Ascending aorta (tissue), 2 donors: ENCODE measurements at regions of chr5 and their contacts with region 1.

Region 1: DNA sequence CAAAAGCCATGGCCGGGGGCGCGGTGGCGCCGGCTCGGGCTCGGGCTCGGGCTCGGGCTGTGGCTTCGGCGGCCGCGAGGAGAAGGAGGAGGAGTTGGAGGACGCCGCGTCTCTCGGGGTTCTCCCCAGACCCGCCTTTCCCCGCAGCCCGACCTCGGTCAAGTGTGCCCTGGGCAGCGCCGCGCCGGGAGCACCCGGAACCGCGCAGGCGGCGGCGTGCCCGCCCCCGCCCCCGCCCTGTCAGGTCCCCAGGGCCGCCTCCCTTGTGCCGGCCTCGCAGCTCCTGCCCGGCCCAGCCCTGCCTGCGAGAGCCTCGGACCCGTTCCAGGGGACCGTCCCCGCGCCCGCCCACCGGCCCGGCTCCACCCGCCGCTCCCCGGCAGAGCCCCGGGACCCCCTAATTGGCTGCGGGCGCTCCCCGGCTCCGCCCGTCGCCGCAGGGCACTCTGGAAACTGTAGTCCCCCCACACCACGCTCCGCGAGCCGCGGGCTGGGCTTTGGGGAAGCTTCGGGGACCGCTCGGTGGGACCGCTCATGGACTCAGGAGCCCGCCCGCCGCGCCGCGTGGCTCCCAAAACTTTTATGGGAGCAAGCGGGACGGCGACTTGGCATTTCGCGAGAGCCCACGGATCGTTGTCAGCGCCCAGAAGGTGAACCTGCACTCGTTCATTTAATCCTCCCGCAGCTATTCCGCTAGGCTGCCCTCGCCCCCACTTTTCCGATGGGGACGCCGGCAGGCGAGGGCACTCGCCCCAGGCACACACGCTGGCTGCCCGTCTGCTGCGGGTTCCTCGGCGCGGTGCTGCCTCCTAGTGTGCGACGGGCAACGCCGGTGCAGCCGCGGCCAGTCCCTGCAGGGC is at the start of gene STK10:
- DNase-seq: peak; percentile 70 to 95
- H3K4me3 ChIP-seq: peak within 1 kb of the TSS; percentile 61 to 80
- H3K27ac ChIP-seq: peak within 1 kb of the TSS; percentile 86 to 88
- H3K4me1 ChIP-seq: peaks cover 0 to 8% of the 10 kb centered on the region in 2 donors
- H3K27me3 ChIP-seq: no peaks in the 10 kb centered on the region
- CTCF ChIP-seq: peak; percentile 91 to 94 (median 92)
- total RNA-seq, gene STK10: 18.4 TPM

Region 2: DNA sequence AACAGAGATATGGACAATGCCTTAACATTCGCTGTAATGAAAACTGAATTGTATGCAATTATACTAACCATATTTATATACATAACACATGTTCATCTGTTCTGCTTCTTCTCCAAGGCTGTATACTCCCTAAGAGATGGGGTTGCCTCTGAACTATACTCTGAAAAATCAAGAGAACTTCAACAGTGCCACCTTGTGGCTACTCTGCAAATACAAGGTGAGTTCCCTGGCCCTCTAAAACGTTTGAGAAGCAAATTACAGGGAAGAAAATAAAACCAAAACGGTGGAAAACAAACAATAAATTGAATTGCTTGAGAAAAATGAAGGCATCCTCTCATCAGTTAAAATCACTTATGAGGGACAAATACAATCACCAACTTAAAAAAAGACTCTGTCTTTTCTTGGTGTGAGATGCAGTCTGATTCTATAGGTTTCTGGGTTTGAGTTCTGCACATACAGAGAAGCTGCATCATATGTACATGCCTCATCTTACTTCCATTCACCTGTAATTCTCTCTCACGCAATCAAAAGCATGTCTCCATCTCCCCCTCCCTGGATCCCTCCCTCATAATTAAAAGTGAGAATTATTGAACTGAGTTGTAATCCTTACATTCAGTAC is 280.4 kb before region 1 on chr5:
- intact Hi-C with region 1: loop called (anchors 1 kb)
- DNase-seq: no peak
- H3K4me3 ChIP-seq: no peak overlapping the region
- H3K27ac ChIP-seq: no peak overlapping the region
- H3K4me1 ChIP-seq: peaks cover 0 to 5% of the 10 kb centered on the region in 2 donors
- H3K27me3 ChIP-seq: no peaks in the 10 kb centered on the region
- CTCF ChIP-seq: peak; percentile 69 to 79 (median 73)

Region 3: DNA sequence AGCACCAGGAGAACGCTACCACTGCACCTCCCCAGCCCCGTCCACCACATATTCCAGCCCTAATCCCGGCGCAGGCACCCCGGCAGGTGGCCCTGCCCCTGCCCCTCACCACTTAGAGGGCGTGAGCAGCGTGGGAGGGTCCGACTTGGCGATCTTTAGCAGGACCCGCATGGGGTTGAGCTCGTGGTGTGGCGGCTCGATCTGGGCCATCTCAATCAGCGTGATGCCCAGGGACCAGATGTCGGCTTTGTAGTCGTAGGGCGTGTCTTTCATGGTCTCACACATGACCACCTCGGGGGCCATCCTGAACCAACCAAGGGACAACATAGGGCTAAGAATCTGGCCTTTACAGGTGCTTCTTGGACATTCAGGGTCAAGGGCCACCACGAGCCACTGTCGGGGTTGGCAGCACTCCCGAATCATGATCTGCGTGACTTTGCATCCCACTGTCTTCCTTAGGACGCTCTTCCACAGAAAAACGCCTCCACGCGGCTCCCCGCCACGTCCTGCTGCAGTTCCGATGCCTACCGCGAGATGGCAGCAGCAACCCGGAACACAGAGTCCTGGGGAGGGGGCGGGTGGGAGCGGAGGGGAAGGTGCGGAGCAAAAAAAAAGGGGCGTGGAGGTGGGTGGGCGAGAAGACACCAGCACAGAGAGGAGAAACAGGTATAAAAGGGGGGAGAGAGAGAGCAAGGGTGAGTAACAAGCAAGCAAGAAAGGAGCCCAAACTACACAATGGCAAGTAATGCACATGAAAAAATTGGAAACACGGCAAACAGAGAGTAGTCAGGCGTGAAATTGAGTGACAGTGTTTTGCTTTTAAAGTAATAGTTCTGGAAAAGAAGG is 81.5 kb before region 1 on chr5:
- intact Hi-C with region 1: loop called (anchors 1 kb)
- DNase-seq: peak in 1 of 2 donors; percentile 76
- H3K4me3 ChIP-seq: peak overlapping the region in 1 of 2 donors; percentile 25
- H3K27ac ChIP-seq: no peak overlapping the region
- H3K4me1 ChIP-seq: peaks cover 2 to 20% of the 10 kb centered on the region in 2 donors
- H3K27me3 ChIP-seq: no peaks in the 10 kb centered on the region
- CTCF ChIP-seq: peak; percentile 69 to 100 (median 100)

Region 4: GRCh38 chr5:172454358-172455086 is 266.3 kb after region 1 on chr5 and contains the start of gene SH3PXD2B:
- intact Hi-C with region 1: loop called (anchors 10 kb)
- DNase-seq: peak in 1 of 2 donors; percentile 80
- H3K4me3 ChIP-seq: peak within 1 kb of the TSS; percentile 89 to 94
- H3K27ac ChIP-seq: peak within 1 kb of the TSS; percentile 83 to 87
- H3K4me1 ChIP-seq: peaks cover 9 to 19% of the 10 kb centered on the region in 2 donors
- H3K27me3 ChIP-seq: no peaks in the 10 kb centered on the region
- CTCF ChIP-seq: no peak
- total RNA-seq, gene SH3PXD2B: 60.8 TPM

Region 5: DNA sequence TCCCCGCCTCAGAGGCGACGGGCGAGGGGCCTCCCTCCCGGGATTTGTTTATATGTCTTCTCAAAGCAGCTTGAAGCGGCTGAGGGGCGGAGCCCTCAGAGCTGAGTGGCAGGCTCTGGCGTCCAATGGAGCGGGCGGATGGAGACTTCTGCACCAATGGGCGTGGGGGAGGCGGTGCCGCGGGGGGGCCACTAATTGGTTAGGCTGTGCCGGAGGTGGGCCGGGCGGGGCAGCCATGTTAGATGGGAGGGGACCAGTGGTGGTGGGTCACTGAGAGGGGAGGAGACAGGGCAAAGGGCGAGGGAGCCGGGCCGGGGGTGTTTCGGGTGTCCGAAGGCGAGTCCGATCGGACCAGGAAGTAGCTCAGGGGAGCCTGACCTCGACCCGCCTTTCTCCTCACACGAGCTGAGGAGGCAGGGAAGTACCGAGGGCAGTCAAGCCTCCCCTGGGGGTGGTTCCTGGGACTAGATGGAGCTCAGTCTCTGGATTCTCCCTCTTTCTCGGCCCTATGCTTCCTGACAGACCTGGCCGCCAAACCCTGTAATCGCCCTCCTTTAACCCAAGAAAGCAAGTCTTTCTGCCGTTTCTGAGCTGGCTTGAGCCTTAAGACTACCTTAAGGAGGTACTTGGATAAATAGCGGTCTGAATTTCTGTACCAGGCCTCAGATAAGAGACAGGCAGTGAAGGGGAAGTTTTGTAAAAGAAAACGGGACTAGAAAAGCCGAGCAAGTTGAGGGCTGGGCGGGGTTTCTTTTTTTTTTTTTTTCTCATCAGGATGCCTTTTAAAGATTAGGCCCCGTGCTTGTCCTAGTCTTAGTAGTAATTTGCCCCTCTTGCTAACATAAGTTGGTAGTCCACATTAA is 869.0 kb after region 1 on chr5:
- intact Hi-C with region 1: loop called (anchors 5 kb)
- DNase-seq: peak; percentile 98 to 100
- H3K4me3 ChIP-seq: peak overlapping the region; percentile 76 to 98
- H3K27ac ChIP-seq: peak overlapping the region; percentile 93 to 100
- H3K4me1 ChIP-seq: peaks cover 0 to 23% of the 10 kb centered on the region in 2 donors
- H3K27me3 ChIP-seq: no peaks in the 10 kb centered on the region
- CTCF ChIP-seq: peak; percentile 19 to 30 (median 21)